ENCODE measurements at regions of chr9 and their contacts with region 1.

Region 1: DNA sequence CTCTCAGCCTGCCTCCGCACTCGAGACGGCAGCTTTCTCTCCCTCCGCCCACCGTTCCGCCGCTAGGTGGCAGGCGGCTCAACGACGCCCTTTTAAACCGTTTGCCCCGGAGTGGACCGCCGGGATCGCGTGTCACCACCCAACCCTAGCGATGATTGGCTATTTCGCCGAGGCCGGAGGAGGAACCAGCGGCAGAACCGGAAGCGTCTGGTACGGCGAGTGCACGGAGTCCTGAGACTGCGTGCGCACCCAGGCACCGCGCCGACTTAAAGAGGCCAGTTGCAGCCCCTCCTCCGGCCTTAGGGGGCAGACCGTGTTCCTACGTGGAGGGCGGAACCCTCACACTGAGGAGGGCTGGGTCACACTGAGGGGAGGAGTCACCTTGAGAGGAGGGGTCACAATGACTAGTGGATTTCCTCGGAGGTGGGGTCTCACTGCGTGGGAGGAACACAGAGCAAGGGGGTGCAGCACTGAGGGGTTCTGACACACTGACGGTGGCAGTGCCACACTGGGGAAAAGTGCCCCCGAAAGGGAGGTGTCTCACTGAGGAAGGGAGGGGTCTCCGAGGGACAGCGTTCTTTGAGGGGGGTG is 980 bp upstream of the TESK1 start:
- DNase-seq: peak; percentile 100
- H3K4me3 Mint-ChIP-seq: peak overlapping the region; percentile 97
- H3K27ac Mint-ChIP-seq: peak overlapping the region; percentile 98
- H3K4me1 Mint-ChIP-seq: peaks cover 29% of the 10 kb centered on the region
- H3K27me3 Mint-ChIP-seq: no peaks in the 10 kb centered on the region

Region 2: DNA sequence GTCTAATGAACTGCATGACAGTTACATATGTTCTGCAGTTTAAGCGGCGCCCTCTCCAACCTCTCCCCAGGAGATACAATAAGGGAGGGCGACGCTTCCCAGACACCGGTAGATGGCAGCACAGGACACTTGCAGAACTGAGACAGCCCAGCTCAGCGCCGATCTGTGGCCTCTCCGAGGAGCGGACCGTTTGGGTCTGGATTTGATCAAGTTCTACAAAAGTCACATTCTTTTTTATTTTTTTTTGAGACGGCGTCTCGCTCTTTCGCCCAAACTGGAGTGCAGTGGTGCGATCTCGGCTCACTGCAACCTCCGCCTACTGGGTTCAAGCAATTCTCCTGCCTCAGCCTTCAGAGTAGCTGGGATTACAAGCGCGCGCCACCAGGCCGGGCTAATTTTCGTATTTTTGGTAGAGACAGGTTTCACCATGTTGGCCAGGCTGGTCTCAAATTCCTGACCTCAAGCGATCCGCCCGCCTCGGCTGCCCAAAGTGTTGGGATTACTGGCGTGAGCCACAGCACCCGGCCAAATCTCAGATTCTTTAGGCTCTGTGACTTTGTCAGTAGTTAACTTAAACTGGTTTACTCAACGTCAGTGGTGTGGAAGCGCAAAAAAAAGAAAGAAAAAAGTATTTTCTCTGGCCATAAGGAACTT is 487.1 kb before region 1 on chr9:
- CTCF ChIA-PET with region 1: interaction called, 3 read pairs
- POLR2A ChIA-PET with region 1: no interaction called
- intact Hi-C with region 1: loop called (anchors 1 kb)
- DNase-seq: peak; percentile 91
- H3K4me3 Mint-ChIP-seq: peak overlapping the region; percentile 81
- H3K27ac Mint-ChIP-seq: peak overlapping the region; percentile 91
- H3K4me1 Mint-ChIP-seq: peaks cover 33% of the 10 kb centered on the region
- H3K27me3 Mint-ChIP-seq: no peaks in the 10 kb centered on the region

Region 3: GRCh38 chr9:35616681-35617459 is 12.8 kb after region 1 on chr9:
- CTCF ChIA-PET with region 1: interaction called, 14 read pairs
- POLR2A ChIA-PET with region 1: interaction called, 7 read pairs
- intact Hi-C with region 1: loop called (anchors 1 kb)
- DNase-seq: peak; percentile 80
- H3K4me3 Mint-ChIP-seq: peak overlapping the region; percentile 77
- H3K27ac Mint-ChIP-seq: peak overlapping the region; percentile 79
- H3K4me1 Mint-ChIP-seq: peaks cover 37% of the 10 kb centered on the region
- H3K27me3 Mint-ChIP-seq: no peaks in the 10 kb centered on the region

Region 4: GRCh38 chr9:35664531-35665470 is 60.7 kb after region 1 on chr9 and contains the start of gene ARHGEF39:
- CTCF ChIA-PET with region 1: interaction called, 11 read pairs
- POLR2A ChIA-PET with region 1: interaction called, 4 read pairs
- intact Hi-C with region 1: no loop called
- DNase-seq: peak; percentile 89
- H3K4me3 Mint-ChIP-seq: peak within 1 kb of the TSS; percentile 84
- H3K27ac Mint-ChIP-seq: peak within 1 kb of the TSS; percentile 73
- H3K4me1 Mint-ChIP-seq: peaks cover 53% of the 10 kb centered on the region
- H3K27me3 Mint-ChIP-seq: no peaks in the 10 kb centered on the region
- total RNA-seq, gene ARHGEF39: 28.1 to 28.2 TPM

Region 5: GRCh38 chr9:35814841-35815543 is 210.9 kb after region 1 on chr9 and contains the start of gene HINT2:
- CTCF ChIA-PET with region 1: no interaction called
- POLR2A ChIA-PET with region 1: no interaction called
- intact Hi-C with region 1: loop called (anchors 1 kb)
- DNase-seq: peak; percentile 99
- H3K4me3 Mint-ChIP-seq: peak within 1 kb of the TSS; percentile 96
- H3K27ac Mint-ChIP-seq: peak within 1 kb of the TSS; percentile 93
- H3K4me1 Mint-ChIP-seq: peaks cover 33% of the 10 kb centered on the region
- H3K27me3 Mint-ChIP-seq: no peaks in the 10 kb centered on the region
- total RNA-seq, gene HINT2: 67.8 to 72.6 TPM